Activated CD8-positive, alpha-beta memory T cell treated with anti-CD3 and anti-CD28 coated beads, Interleukin-2, amount 10 ng/mL, durations not matched to agents 7 days and 5 days (primary cell): ENCODE measurements at regions of chr7 and their contacts with region 1.

Region 1: GRCh38 chr7:149799397-149800171 is 26.2 kb upstream of the ZNF467 start:
- DNase-seq: peak; percentile 60
- ATAC-seq: peak; percentile 55
- H3K4me3 Mint-ChIP-seq: no peak overlapping the region
- H3K27ac Mint-ChIP-seq: no peak overlapping the region
- H3K4me1 Mint-ChIP-seq: no peaks in the 10 kb centered on the region
- H3K27me3 Mint-ChIP-seq: no peaks in the 10 kb centered on the region

Region 2: DNA sequence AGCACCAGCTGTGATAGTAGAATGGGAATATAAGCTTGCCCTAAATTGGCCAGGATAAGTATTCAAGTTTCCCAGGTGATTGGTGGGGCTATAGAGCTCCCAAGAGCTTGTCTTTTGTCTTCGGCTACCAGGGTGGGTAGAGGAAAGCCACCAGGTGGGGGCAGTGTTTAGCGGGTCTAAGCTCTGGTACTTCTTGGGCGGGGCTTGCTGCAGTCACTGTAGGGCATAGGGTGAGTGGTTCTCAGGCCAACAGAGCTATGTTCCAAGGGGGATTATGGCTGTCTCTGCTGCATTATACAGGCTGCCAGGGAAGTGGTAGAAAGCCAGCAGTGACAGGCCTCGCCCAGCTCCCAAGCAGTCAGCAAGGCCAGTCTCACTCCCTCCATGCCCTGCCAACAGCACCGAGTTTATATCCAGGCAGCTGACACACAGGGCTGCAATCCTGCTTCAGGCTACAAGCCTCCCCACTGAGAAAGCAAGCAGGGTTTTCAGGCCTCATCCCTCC is 136.9 kb before region 1 on chr7:
- CTCF ChIA-PET with region 1: interaction called, 10 read pairs
- DNase-seq: peak; percentile 75
- ATAC-seq: peak; percentile 86
- H3K4me3 Mint-ChIP-seq: no peak overlapping the region
- H3K27ac Mint-ChIP-seq: no peak overlapping the region
- H3K4me1 Mint-ChIP-seq: no peaks in the 10 kb centered on the region
- H3K27me3 Mint-ChIP-seq: peaks cover 72% of the 10 kb centered on the region